ENCODE measurements at regions of chr3 and their contacts with region 1.

Region 1: GRCh38 chr3:46276502-46277099 is 34.3 kb downstream of the CCR3 start:
- DNase-seq: peak; percentile 78
- H3K4me3 Mint-ChIP-seq: no peak overlapping the region
- H3K27ac Mint-ChIP-seq: peak overlapping the region; percentile 3
- H3K4me1 Mint-ChIP-seq: peaks cover 49% of the 10 kb centered on the region
- H3K27me3 Mint-ChIP-seq: peaks cover 27% of the 10 kb centered on the region

Region 2: GRCh38 chr3:46214751-46215352 is 61.7 kb before region 1 on chr3:
- CTCF ChIA-PET with region 1: interaction called, 11 read pairs
- POLR2A ChIA-PET with region 1: no interaction called
- DNase-seq: no peak
- H3K4me3 Mint-ChIP-seq: no peak overlapping the region
- H3K27ac Mint-ChIP-seq: no peak overlapping the region
- H3K4me1 Mint-ChIP-seq: peaks cover 23% of the 10 kb centered on the region
- H3K27me3 Mint-ChIP-seq: peaks cover 18% of the 10 kb centered on the region

Region 3: DNA sequence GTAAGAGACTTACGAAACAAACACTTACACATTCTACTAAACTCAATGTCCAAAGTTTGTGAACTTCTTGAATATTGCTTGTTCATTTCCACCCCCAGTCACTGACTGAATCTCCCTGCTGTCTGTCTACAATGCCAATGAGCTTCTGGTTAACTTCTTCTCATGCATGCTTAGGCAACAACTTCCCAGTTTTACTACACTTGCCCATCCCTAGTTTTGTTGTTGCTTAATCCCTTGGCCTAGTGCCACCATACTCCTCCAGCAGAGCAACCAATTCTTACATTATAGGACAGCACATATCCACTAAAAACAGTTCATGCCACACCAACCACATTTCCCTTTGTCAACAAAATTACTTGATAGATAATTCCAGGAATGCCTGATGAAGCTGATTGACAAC is 36.4 kb after region 1 on chr3:
- CTCF ChIA-PET with region 1: no interaction called
- POLR2A ChIA-PET with region 1: no interaction called
- DNase-seq: no peak
- H3K4me3 Mint-ChIP-seq: no peak overlapping the region
- H3K27ac Mint-ChIP-seq: no peak overlapping the region
- H3K4me1 Mint-ChIP-seq: peaks cover 11% of the 10 kb centered on the region
- H3K27me3 Mint-ChIP-seq: peaks cover 46% of the 10 kb centered on the region

Region 4: DNA sequence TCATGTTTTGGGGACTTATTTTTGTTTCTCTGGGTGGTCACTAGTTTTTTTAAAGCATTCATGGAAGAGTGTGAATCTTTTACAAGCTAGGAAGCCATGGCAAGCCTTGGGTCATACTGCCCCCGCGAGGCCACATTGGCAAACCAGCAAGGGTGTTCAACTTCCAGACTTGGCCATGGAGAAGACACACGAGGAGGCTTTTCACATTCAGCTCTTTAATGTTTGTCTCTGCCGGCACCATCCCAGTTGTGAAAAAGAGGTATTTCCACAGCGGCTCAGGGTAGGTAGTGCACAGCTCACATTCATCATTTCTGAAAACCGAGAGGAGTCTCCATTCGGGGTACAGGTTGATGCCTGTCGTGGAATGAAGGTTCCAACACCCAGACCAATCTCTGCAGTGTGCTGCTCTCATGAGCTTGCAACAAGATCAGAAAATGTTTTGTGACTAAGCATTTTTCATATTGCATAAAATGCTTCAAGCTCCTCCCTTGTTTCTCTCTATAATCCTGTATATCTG is 101.9 kb after region 1 on chr3:
- CTCF ChIA-PET with region 1: interaction called, 42 read pairs
- POLR2A ChIA-PET with region 1: no interaction called
- DNase-seq: peak; percentile 74
- H3K4me3 Mint-ChIP-seq: no peak overlapping the region
- H3K27ac Mint-ChIP-seq: no peak overlapping the region
- H3K4me1 Mint-ChIP-seq: peaks cover 49% of the 10 kb centered on the region
- H3K27me3 Mint-ChIP-seq: peaks cover 18% of the 10 kb centered on the region

Region 5: GRCh38 chr3:46429680-46430079 is 153.1 kb after region 1 on chr3:
- CTCF ChIA-PET with region 1: no interaction called
- POLR2A ChIA-PET with region 1: no interaction called
- DNase-seq: no peak
- H3K4me3 Mint-ChIP-seq: no peak overlapping the region
- H3K27ac Mint-ChIP-seq: no peak overlapping the region
- H3K4me1 Mint-ChIP-seq: peaks cover 25% of the 10 kb centered on the region
- H3K27me3 Mint-ChIP-seq: peaks cover 5% of the 10 kb centered on the region

Measured in activated CD4-positive, alpha-beta T cell treated with anti-CD3 and anti-CD28 coated beads, Interleukin-2, amount 10 ng/mL, durations not matched to agents 7 days and 5 days (primary cell).